Activated CD8-positive, alpha-beta T cell treated with anti-CD3 and anti-CD28 coated beads, Interleukin-2, amount 10 ng/mL, durations not matched to agents 7 days and 5 days (primary cell): ENCODE measurements at regions of chr14 and their contacts with region 1.

Region 1: GRCh38 chr14:81464247-81465002 is 64.3 kb upstream of the STON2 start:
- DNase-seq: peak; percentile 80
- ATAC-seq: peak; percentile 87
- H3K4me3 Mint-ChIP-seq: peak overlapping the region; percentile 80
- H3K27ac Mint-ChIP-seq: peak overlapping the region; percentile 92
- H3K4me1 Mint-ChIP-seq: peaks cover 18% of the 10 kb centered on the region
- H3K27me3 Mint-ChIP-seq: peaks cover under 1% of the 10 kb centered on the region

Region 2: GRCh38 chr14:80996049-80996901 is 468.1 kb before region 1 on chr14:
- CTCF ChIA-PET with region 1: interaction called, 12 read pairs
- POLR2A ChIA-PET with region 1: no interaction called
- DNase-seq: peak; percentile 32
- ATAC-seq: peak; percentile 72
- H3K4me3 Mint-ChIP-seq: no peak overlapping the region
- H3K27ac Mint-ChIP-seq: no peak overlapping the region
- H3K4me1 Mint-ChIP-seq: no peaks in the 10 kb centered on the region
- H3K27me3 Mint-ChIP-seq: peaks cover 26% of the 10 kb centered on the region

Region 3: DNA sequence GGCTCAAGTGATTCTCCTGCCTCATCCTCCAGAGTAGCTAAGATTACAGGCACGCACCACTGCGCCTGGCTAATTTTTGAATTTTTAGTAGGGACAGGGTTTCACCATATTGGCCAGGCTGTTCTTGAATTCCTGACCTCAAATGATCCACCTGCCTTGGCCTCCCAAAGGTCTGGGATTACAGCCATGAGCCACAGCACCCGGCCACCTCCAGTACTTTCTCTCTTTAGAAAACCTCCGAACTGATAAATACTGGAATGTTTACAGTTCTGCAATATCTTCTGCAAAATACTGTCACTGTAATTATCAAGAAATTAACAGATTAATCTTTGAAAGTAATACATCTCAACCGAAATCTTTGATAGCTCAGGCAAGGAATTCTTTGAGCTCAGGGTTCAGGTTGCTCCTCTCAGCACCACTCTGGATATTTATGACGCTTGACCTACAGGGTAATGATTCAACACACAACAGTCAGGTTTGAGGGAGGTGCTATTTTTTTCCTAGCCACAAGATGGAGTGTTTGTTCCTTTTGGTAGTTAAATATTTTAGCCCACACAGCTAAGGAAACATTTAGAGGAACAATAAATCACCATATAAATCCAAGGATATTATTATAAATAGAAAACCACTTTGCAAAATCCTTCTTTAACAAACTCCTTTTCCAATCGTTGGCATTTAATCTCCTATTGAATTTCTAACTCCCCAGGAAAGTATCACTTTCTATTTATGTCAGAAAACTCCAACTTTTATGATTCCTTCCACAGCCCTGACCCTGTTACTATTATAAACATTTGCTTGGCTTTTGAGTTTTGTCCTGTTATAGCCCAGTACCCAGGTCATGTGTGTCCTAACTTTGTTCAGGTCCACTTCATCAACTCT is 195.1 kb before region 1 on chr14:
- CTCF ChIA-PET with region 1: interaction called, 55 read pairs
- POLR2A ChIA-PET with region 1: interaction called, 6 read pairs
- DNase-seq: peak; percentile 39
- ATAC-seq: peak; percentile 70
- H3K4me3 Mint-ChIP-seq: no peak overlapping the region
- H3K27ac Mint-ChIP-seq: no peak overlapping the region
- H3K4me1 Mint-ChIP-seq: peaks cover 9% of the 10 kb centered on the region
- H3K27me3 Mint-ChIP-seq: peaks cover 27% of the 10 kb centered on the region

Region 4: GRCh38 chr14:81382517-81383132 is 81.8 kb before region 1 on chr14:
- CTCF ChIA-PET with region 1: no interaction called
- POLR2A ChIA-PET with region 1: no interaction called
- DNase-seq: no peak
- ATAC-seq: no peak
- H3K4me3 Mint-ChIP-seq: no peak overlapping the region
- H3K27ac Mint-ChIP-seq: no peak overlapping the region
- H3K4me1 Mint-ChIP-seq: no peaks in the 10 kb centered on the region
- H3K27me3 Mint-ChIP-seq: peaks cover 17% of the 10 kb centered on the region

Region 5: DNA sequence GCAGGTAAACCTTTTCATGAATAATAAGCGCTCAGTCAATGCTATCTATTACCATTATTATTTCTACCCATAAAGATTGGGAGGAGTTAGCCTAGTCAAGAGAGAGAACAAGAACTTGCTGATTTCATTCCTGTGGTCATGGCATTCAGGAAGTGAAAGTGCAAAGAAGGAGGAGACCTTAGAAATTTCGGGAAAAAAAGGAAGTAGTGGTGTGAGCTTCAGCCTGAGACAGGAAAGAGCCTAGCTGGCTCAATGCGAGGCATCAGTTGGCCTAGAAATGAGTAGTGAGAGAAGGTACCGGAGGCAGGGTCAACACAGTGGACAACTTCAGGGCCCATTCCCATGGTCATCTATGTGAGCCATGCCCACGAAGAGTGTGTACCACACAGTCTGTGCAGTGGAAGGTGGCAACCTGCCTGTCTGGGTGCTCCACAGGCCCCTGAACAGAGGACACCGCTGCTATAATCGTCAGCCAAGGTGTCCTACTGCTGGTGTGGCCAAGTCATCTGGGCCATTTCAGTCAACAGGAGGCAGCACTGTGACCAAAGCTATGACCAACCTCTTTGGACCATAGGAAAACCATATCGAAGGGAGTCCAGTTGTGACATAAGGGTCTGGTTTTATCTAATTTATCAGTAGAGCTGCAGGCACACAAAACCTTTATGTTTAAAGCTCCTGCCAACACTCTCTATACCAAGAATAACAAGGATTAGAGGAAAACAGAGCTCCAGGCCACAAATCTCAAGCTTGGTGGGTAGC is 48.1 kb before region 1 on chr14:
- CTCF ChIA-PET with region 1: no interaction called
- POLR2A ChIA-PET with region 1: no interaction called
- DNase-seq: no peak
- ATAC-seq: no peak
- H3K4me3 Mint-ChIP-seq: no peak overlapping the region
- H3K27ac Mint-ChIP-seq: no peak overlapping the region
- H3K4me1 Mint-ChIP-seq: peaks cover 6% of the 10 kb centered on the region
- H3K27me3 Mint-ChIP-seq: peaks cover 2% of the 10 kb centered on the region

Region 6: DNA sequence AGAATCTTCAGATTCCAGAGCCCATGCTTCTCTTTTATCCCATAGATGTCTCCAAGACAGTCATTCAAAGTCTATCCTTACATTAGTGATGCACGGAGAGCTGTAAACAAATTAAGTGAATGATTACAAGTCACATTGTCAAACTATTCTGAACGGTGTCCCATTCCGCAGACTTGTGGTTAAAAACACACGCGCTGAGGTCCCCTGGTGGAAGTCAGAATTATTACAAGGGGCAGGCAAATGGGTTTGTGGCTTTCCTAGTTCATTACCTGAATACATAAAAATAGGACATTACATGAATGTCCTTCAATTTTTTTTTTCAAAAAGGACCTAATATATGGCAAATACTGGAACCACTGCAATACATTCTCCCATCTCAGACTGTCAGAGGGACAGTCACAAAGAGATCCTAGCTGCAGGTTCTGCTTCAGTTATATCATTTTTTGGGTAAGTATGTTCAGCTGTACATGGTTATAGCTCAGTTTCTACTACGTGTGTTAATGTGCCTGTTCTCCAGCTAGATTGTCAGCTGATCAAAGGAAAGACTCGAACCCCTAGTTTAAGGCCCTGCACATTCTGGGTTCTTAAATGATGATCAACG is 11.2 kb before region 1 on chr14:
- CTCF ChIA-PET with region 1: interaction called, 35 read pairs
- POLR2A ChIA-PET with region 1: interaction called, 3 read pairs
- DNase-seq: peak; percentile 67
- ATAC-seq: peak; percentile 74
- H3K4me3 Mint-ChIP-seq: no peak overlapping the region
- H3K27ac Mint-ChIP-seq: no peak overlapping the region
- H3K4me1 Mint-ChIP-seq: peaks cover 10% of the 10 kb centered on the region
- H3K27me3 Mint-ChIP-seq: peaks cover 19% of the 10 kb centered on the region

Region 7: GRCh38 chr14:81485372-81485771 is 20.9 kb after region 1 on chr14:
- CTCF ChIA-PET with region 1: interaction called, 14 read pairs
- POLR2A ChIA-PET with region 1: interaction called, 4 read pairs
- DNase-seq: peak; percentile 39
- ATAC-seq: peak; percentile 49
- H3K4me3 Mint-ChIP-seq: no peak overlapping the region
- H3K27ac Mint-ChIP-seq: peak overlapping the region; percentile 24
- H3K4me1 Mint-ChIP-seq: peaks cover 10% of the 10 kb centered on the region
- H3K27me3 Mint-ChIP-seq: no peaks in the 10 kb centered on the region

Region 8: GRCh38 chr14:81533536-81534343 is 69.3 kb after region 1 on chr14 and contains the start of gene SEL1L:
- CTCF ChIA-PET with region 1: interaction called, 13 read pairs
- POLR2A ChIA-PET with region 1: no interaction called
- DNase-seq: peak; percentile 100
- ATAC-seq: peak; percentile 97
- H3K4me3 Mint-ChIP-seq: peak within 1 kb of the TSS; percentile 93
- H3K27ac Mint-ChIP-seq: peak within 1 kb of the TSS; percentile 89
- H3K4me1 Mint-ChIP-seq: peaks cover 38% of the 10 kb centered on the region
- H3K27me3 Mint-ChIP-seq: peaks cover 3% of the 10 kb centered on the region
- total RNA-seq, gene SEL1L: 48.9 to 51.3 TPM

Region 9: GRCh38 chr14:81655423-81656314 is 191.2 kb after region 1 on chr14:
- CTCF ChIA-PET with region 1: no interaction called
- POLR2A ChIA-PET with region 1: no interaction called
- DNase-seq: no peak
- ATAC-seq: no peak
- H3K4me3 Mint-ChIP-seq: no peak overlapping the region
- H3K27ac Mint-ChIP-seq: no peak overlapping the region
- H3K4me1 Mint-ChIP-seq: no peaks in the 10 kb centered on the region
- H3K27me3 Mint-ChIP-seq: no peaks in the 10 kb centered on the region